ENCODE measurements at regions of chr15 and their contacts with region 1.

Region 1: DNA sequence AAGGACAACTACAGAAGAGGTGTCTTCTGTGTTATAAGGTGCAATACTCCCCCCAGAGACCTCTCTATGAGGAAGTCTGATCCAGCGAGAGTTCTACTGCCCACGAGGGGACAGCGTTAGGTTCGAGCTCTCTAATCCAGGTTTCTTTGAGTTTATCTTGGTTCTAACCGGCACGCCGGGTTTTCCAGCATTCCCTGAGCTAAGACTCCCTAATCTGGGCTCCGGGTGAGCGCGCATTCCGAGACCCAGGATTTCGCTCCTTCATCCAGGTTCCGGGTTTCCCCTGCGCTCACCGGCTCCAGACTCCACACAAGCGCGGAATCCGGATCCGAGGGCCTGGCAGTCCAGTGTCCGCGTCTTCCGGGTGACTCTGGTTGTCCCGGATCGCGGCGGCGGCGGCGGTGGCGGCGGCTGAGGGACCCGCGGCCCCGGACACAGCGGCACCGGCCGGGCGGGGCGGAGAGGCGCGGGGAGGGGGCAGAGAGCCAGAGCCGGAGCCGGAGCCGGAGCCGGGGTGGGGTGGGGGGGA is at the start of gene ZNF609:
- DNase-seq: peak; percentile 89
- H3K4me3 Mint-ChIP-seq: peak within 1 kb of the TSS; percentile 87
- H3K27ac Mint-ChIP-seq: peak within 1 kb of the TSS; percentile 72
- H3K4me1 Mint-ChIP-seq: peaks cover 42% of the 10 kb centered on the region
- H3K27me3 Mint-ChIP-seq: no peaks in the 10 kb centered on the region
- total RNA-seq, gene ZNF609: 30.0 to 34.1 TPM

Region 2: DNA sequence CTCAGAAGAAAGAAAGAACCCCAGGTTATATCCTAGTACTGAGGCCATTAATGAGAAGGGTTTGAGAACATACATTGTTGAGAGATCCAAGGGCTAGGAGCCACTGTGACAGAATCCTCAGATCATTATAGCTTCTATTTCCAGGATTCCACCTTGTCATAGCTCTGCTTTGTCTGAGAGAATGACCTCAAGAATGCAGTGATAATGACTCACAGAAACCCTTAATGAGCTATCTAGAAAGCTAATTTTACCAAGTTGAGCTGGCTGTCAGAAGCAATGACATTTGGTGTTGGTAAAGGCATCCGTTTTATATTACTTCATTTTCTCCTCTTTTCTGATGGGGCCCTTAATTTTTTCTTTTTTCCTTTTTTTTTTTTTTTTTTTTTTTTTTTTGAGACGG is 61.7 kb before region 1 on chr15:
- CTCF ChIA-PET with region 1: no interaction called
- POLR2A ChIA-PET with region 1: no interaction called
- DNase-seq: no peak
- H3K4me3 Mint-ChIP-seq: no peak overlapping the region
- H3K27ac Mint-ChIP-seq: no peak overlapping the region
- H3K4me1 Mint-ChIP-seq: peaks cover 9% of the 10 kb centered on the region
- H3K27me3 Mint-ChIP-seq: no peaks in the 10 kb centered on the region

Region 3: DNA sequence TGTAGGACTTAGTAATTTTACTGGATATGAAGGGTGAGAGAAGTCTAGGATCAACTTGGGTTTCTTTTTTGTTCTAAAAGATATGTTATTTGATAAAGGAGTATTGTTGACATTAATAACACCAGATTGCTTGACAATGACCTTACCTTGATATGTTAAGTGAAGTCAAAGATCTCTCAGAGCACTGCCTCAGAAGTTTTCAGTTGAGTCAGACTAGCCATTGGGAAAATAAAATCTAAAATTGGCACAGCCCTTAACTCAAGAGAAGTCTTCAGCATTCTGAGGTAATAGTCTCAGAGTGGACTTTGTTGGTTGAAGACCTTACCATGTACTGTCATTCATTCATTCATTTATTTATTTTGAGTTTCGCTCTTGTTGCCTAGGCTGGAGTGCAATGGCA is 22.3 kb before region 1 on chr15:
- CTCF ChIA-PET with region 1: no interaction called
- POLR2A ChIA-PET with region 1: no interaction called
- DNase-seq: no peak
- H3K4me3 Mint-ChIP-seq: no peak overlapping the region
- H3K27ac Mint-ChIP-seq: no peak overlapping the region
- H3K4me1 Mint-ChIP-seq: peaks cover 23% of the 10 kb centered on the region
- H3K27me3 Mint-ChIP-seq: no peaks in the 10 kb centered on the region

Region 4: DNA sequence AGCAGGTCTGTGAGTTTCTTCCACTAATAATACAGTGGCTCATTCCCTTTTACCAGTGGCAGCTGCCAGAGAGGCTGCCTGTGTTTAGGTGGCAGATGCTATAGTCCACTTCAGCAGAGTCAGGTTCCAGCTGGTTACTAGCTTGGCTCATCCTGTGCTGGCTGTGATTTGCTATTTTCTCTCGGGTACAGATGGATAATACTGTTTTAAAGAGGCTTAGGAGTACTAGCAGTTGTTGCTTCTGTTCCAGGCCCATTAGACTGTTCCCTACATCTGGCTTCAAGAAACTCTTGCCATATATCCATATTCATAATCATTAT is 41.1 kb after region 1 on chr15:
- CTCF ChIA-PET with region 1: no interaction called
- POLR2A ChIA-PET with region 1: interaction called, 10 read pairs
- DNase-seq: no peak
- H3K4me3 Mint-ChIP-seq: no peak overlapping the region
- H3K27ac Mint-ChIP-seq: no peak overlapping the region
- H3K4me1 Mint-ChIP-seq: peaks cover 41% of the 10 kb centered on the region
- H3K27me3 Mint-ChIP-seq: no peaks in the 10 kb centered on the region

Region 5: GRCh38 chr15:64536244-64536836 is 76.1 kb after region 1 on chr15:
- CTCF ChIA-PET with region 1: no interaction called
- POLR2A ChIA-PET with region 1: no interaction called
- DNase-seq: no peak
- H3K4me3 Mint-ChIP-seq: no peak overlapping the region
- H3K27ac Mint-ChIP-seq: peak overlapping the region; percentile 18
- H3K4me1 Mint-ChIP-seq: peaks cover 36% of the 10 kb centered on the region
- H3K27me3 Mint-ChIP-seq: no peaks in the 10 kb centered on the region

Measured in activated CD4-positive, alpha-beta memory T cell treated with anti-CD3 and anti-CD28 coated beads, Interleukin-2, amount 10 ng/mL, durations not matched to agents 7 days and 5 days (primary cell).